ENCODE measurements at regions of chr4 and their contacts with region 1.

Region 1: DNA sequence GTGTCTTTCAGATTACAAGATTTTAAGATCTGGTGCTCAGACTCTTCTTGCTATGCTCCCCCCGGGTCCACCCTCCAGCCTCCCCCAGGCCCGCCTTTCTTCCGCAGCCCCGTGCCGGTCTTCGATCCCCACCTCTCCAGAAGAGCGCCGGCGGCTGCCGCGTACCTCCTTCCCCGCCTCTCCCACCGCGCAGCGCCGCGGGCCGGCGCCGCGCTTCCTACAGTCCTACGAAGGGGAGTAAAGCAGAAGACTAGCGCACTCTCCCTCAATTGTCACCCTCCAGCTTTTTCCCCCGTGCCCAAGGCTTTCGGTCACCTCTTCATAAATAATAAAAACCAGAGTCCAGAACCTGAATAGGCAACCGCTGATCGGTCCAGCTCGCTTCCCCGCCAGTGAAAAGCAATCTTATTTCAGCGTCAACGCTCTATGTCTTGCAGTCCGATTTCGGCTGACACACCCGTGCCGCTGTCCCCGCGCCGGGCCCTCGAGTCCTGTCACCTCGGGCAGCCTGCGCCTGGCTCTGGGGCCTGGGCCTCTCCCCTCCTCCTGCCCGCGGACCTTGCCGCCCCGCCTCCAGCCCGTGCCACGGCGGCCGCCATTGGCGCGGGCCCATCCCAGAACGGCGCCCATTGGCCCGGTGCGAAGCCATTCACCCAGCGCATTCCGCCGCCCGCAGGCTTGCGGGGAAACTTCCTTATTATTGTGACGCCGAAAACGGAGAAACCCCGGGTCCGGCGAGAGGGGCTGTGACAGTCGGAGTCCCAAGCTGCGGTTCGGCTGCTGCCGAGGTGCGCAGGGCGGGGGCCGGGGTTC is at the start of gene HERC3:
- DNase-seq: peak; percentile 93
- ATAC-seq: peak; percentile 92
- H3K4me3 ChIP-seq: peak within 1 kb of the TSS; percentile 58 to 97 (median 92)
- H3K4me3 Mint-ChIP-seq: peak within 1 kb of the TSS; percentile 99
- H3K27ac ChIP-seq: peak within 1 kb of the TSS; percentile 73 to 91
- H3K27ac Mint-ChIP-seq: peak within 1 kb of the TSS; percentile 95
- H3K4me1 ChIP-seq: peaks cover 11 to 16% of the 10 kb centered on the region in 2 donors
- H3K4me1 Mint-ChIP-seq: peaks cover 39% of the 10 kb centered on the region
- H3K27me3 ChIP-seq: no peaks in the 10 kb centered on the region
- H3K27me3 Mint-ChIP-seq: no peaks in the 10 kb centered on the region
- CTCF ChIP-seq: peak; percentile 15
- total RNA-seq, gene HERC3: 75.5 and 78.1 TPM in 2 replicates

Region 2: DNA sequence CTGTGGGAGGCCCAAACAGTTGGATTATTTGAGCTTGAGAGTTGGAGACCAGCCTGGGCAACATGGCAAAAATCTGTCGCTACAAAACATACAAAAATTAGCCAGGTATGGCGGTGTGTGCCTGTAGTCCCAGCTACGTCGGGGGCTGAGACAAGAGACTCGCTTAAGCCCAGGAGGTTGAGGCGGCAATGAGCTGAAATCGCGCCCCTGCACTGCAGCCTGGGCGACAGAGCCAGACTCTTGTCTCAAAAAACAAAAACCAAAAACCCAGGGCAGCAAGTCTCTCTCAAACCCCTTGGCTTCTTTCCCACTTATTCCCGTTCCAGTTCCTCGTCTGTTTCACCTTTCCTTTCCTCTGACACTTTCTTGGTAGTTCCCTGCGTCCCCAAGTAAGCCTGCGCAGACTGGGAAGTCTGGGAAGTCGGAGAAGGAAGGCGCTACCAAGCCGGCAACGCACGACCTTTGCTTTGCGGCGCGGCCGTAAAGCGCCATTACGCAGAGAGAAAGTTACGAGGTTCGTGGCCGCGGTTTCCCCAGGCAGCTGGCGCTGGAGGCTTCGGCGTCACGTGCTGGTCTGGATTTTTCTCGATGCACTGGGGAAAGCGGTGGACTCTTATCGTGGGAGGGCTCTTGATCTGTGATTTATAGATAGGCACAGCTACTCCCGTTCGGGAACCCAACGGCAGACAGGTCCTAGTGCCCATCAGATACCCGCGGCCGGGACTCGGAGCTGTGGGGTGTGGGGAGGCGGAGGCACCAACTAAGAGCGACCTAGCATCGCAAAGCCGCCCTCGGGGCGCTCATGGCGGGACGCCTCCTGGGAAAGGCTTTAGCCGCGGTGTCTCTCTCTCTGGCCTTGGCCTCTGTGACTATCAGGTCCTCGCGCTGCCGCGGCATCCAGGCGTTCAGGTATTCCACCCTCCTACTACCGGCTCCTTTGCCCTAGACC is 1169.6 kb before region 1 on chr4 and contains the start of gene NUDT9:
- CTCF ChIA-PET with region 1: no interaction called
- POLR2A ChIA-PET with region 1: no interaction called
- intact Hi-C with region 1: loop called (anchors 2 kb)
- DNase-seq: peak; percentile 93
- ATAC-seq: peak; percentile 85
- H3K4me3 ChIP-seq: peak within 1 kb of the TSS; percentile 86 to 97 (median 89)
- H3K4me3 Mint-ChIP-seq: peak within 1 kb of the TSS; percentile 100
- H3K27ac ChIP-seq: peak within 1 kb of the TSS; percentile 80 to 92
- H3K27ac Mint-ChIP-seq: peak within 1 kb of the TSS; percentile 100
- H3K4me1 ChIP-seq: peaks cover 16 to 26% of the 10 kb centered on the region in 2 donors
- H3K4me1 Mint-ChIP-seq: peaks cover 40% of the 10 kb centered on the region
- H3K27me3 ChIP-seq: no peaks in the 10 kb centered on the region
- H3K27me3 Mint-ChIP-seq: no peaks in the 10 kb centered on the region
- CTCF ChIP-seq: no peak
- total RNA-seq, gene NUDT9: 17.5 and 21.5 TPM in 2 replicates

Region 3: DNA sequence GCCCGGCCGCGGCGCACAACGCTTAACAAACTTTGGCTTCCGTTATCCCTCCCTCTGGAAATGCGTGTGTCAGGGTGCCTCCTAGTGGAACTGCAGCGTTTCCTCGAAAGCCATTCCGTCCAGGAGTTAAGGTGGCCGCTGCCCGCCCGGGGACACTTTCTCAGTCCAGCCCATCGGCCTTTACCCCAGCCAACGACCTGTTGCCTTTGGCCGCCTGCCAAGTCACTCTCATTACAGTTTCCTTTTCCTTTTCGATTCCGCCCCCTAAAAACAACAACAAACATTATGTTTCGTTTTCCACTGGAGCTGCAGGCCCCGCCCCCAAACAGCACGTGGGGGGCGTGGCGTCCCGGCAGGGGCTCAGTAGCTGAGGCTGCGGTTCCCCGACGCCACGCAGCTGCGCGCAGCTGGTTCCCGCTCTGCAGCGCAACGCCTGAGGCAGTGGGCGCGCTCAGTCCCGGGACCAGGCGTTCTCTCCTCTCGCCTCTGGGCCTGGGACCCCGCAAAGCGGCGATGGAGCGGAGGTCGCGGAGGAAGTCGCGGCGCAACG is 135.2 kb before region 1 on chr4 and contains the start of gene HERC5:
- CTCF ChIA-PET with region 1: no interaction called
- POLR2A ChIA-PET with region 1: no interaction called
- intact Hi-C with region 1: loop called (anchors 1 kb)
- DNase-seq: peak; percentile 96
- ATAC-seq: peak; percentile 94
- H3K4me3 ChIP-seq: peak within 1 kb of the TSS; percentile 69 to 93 (median 85)
- H3K4me3 Mint-ChIP-seq: peak within 1 kb of the TSS; percentile 100
- H3K27ac ChIP-seq: peak within 1 kb of the TSS; percentile 52 to 70
- H3K27ac Mint-ChIP-seq: peak within 1 kb of the TSS; percentile 99
- H3K4me1 ChIP-seq: peaks cover 11 to 16% of the 10 kb centered on the region in 2 donors
- H3K4me1 Mint-ChIP-seq: peaks cover 19% of the 10 kb centered on the region
- H3K27me3 ChIP-seq: no peaks in the 10 kb centered on the region
- H3K27me3 Mint-ChIP-seq: no peaks in the 10 kb centered on the region
- CTCF ChIP-seq: no peak
- total RNA-seq, gene HERC5: 10.6 and 12.0 TPM in 2 replicates

Region 4: DNA sequence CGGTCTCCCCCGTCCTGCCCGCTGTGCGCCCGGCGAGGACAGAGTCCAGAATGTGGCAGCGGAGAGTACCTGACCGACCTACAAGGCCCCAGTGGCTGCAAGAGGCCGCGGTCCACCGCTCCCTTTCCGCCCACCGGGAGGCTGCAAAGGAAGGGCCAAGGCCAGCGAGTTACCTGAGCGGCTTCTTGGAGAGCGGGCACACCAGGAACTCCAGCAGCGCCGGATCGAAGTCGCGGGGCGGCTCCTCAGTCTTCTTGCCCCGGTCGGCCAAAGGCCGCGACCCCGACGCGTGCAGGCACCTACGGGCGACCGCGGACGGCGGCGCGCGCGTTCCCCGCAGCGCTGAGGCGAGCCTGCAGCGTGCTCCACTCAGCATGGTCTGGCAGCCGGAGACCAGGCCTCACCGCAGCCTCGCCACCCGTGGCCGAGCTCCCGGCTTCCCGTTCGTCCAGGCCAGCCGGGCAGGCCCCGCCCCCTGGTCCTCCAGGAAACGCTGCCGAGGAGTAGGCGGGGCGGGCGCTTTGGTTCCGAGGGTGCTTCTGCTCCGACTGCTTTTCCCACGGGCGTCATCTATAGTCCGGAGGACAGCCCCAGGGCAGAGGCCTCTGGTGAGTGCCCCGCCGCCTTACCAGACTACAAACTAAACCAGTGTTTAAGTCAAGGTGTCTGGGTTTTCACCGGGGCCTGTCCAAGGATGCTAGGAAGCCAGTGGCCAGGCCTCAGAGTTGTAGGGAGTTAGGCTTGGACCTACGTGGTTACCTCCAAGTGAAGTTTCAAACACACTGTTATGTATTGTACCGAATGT is 68.5 kb before region 1 on chr4 and contains the start of gene PYURF:
- CTCF ChIA-PET with region 1: interaction called, 5 read pairs
- POLR2A ChIA-PET with region 1: no interaction called
- intact Hi-C with region 1: loop called (anchors 1 kb)
- DNase-seq: peak; percentile 82
- ATAC-seq: peak; percentile 92
- H3K4me3 ChIP-seq: peak within 1 kb of the TSS; percentile 66 to 88 (median 68)
- H3K4me3 Mint-ChIP-seq: peak within 1 kb of the TSS; percentile 90
- H3K27ac ChIP-seq: peak within 1 kb of the TSS; percentile 28 to 70
- H3K27ac Mint-ChIP-seq: peak within 1 kb of the TSS; percentile 87
- H3K4me1 ChIP-seq: peaks cover 12 to 18% of the 10 kb centered on the region in 2 donors
- H3K4me1 Mint-ChIP-seq: peaks cover 20% of the 10 kb centered on the region
- H3K27me3 ChIP-seq: no peaks in the 10 kb centered on the region
- H3K27me3 Mint-ChIP-seq: no peaks in the 10 kb centered on the region
- CTCF ChIP-seq: no peak
- total RNA-seq, gene PYURF: 38.1 and 40.5 TPM in 2 replicates

Region 5: DNA sequence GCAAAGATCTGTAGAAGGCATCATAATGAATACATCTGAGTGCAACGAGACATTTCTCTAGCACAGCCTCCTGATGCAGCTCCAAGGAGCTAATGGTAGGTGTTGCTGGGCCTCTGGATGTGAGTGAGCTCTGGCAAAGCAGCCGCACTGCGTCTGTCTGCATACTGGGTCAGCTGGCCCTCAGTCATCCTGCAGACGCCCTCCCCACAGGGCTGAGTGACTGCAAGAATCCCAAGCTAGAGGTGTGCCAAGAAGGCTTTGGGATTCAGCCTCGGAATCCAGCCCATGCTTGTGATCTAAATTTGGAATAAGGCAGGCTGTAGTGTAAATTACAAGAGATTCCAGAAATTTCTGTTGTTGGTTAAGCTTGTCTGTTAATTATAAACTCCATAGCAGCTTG is 18.8 kb after region 1 on chr4:
- CTCF ChIA-PET with region 1: interaction called, 6 read pairs
- POLR2A ChIA-PET with region 1: no interaction called
- intact Hi-C with region 1: loop called (anchors 2 kb)
- DNase-seq: no peak
- ATAC-seq: no peak
- H3K4me3 ChIP-seq: no peak overlapping the region
- H3K4me3 Mint-ChIP-seq: no peak overlapping the region
- H3K27ac ChIP-seq: no peak overlapping the region
- H3K27ac Mint-ChIP-seq: peak overlapping the region; percentile 3
- H3K4me1 ChIP-seq: peaks cover 26 to 33% of the 10 kb centered on the region in 2 donors
- H3K4me1 Mint-ChIP-seq: peaks cover 48% of the 10 kb centered on the region
- H3K27me3 ChIP-seq: no peaks in the 10 kb centered on the region
- H3K27me3 Mint-ChIP-seq: no peaks in the 10 kb centered on the region
- CTCF ChIP-seq: no peak

Region 6: GRCh38 chr4:88628759-88629158 is 36.8 kb after region 1 on chr4:
- CTCF ChIA-PET with region 1: no interaction called
- POLR2A ChIA-PET with region 1: no interaction called
- intact Hi-C with region 1: no loop called
- DNase-seq: no peak
- ATAC-seq: no peak
- H3K4me3 ChIP-seq: no peak overlapping the region
- H3K4me3 Mint-ChIP-seq: no peak overlapping the region
- H3K27ac ChIP-seq: no peak overlapping the region
- H3K27ac Mint-ChIP-seq: no peak overlapping the region
- H3K4me1 ChIP-seq: peaks cover 0 to 6% of the 10 kb centered on the region in 2 donors
- H3K4me1 Mint-ChIP-seq: peaks cover 17% of the 10 kb centered on the region
- H3K27me3 ChIP-seq: no peaks in the 10 kb centered on the region
- H3K27me3 Mint-ChIP-seq: no peaks in the 10 kb centered on the region
- CTCF ChIP-seq: no peak

Region 7: GRCh38 chr4:88697588-88698329 is 105.8 kb after region 1 on chr4 and contains the start of gene NAP1L5:
- CTCF ChIA-PET with region 1: no interaction called
- POLR2A ChIA-PET with region 1: no interaction called
- intact Hi-C with region 1: loop called (anchors 5 kb)
- DNase-seq: peak; percentile 84
- ATAC-seq: peak; percentile 92
- H3K4me3 ChIP-seq: peak within 1 kb of the TSS; percentile 55 to 70 (median 67)
- H3K4me3 Mint-ChIP-seq: peak within 1 kb of the TSS; percentile 86
- H3K27ac ChIP-seq: peak within 1 kb of the TSS in 1 of 2 donors; percentile 21
- H3K27ac Mint-ChIP-seq: peak within 1 kb of the TSS; percentile 71
- H3K4me1 ChIP-seq: no peaks in the 10 kb centered on the region
- H3K4me1 Mint-ChIP-seq: peaks cover 8% of the 10 kb centered on the region
- H3K27me3 ChIP-seq: no peaks in the 10 kb centered on the region
- H3K27me3 Mint-ChIP-seq: no peaks in the 10 kb centered on the region
- CTCF ChIP-seq: no peak
- total RNA-seq, gene NAP1L5: 1.2 and 1.7 TPM in 2 replicates

Region 8: DNA sequence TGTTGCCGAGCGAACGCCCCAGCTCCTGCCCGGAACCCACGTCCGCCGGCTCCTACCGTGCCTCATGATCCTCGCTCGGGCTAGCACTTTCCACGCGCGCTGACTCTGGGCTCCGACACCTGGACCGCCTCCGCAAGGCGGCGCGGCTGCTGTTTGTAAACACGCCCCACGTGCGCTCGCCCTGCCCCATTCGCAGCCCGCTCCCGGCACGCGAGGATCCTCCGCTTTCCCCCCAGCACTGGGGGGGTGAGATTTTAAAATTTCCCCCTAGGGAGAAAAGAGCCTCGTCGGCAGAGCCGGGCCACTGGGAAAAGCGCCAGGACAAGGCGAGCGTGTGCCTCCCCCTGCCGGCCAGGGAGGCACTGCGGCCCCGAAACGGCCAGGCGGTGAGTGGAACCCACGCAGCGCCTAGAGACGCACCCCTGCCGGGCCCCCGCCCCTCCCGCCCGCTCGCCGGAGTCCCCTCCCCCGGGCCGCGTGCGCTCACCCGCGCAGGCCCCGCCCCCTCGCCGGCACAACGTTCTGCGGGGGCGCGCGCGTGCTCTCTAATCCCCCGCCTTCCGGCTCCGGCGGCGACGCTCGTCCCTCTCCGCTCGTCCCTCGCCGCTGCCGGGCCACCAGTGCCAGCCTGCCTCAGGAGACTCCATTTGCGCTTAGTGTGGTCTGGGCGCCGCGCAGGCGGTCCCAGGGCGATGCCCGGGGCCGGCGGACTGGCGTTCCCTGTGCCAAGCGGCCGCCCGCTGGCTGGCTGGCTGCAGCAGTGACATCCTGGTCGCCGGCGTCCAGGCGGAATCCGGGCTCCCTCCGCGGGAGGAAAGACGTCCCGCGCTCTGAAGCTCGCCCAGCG is 519.2 kb after region 1 on chr4 and contains the start of gene TIGD2:
- CTCF ChIA-PET with region 1: no interaction called
- POLR2A ChIA-PET with region 1: no interaction called
- intact Hi-C with region 1: loop called (anchors 1 kb)
- DNase-seq: peak; percentile 94
- ATAC-seq: peak; percentile 92
- H3K4me3 ChIP-seq: peak within 1 kb of the TSS; percentile 70 to 88 (median 82)
- H3K4me3 Mint-ChIP-seq: peak within 1 kb of the TSS; percentile 88
- H3K27ac ChIP-seq: peak within 1 kb of the TSS; percentile 30 to 85
- H3K27ac Mint-ChIP-seq: peak within 1 kb of the TSS; percentile 85
- H3K4me1 ChIP-seq: peaks cover 14 to 18% of the 10 kb centered on the region in 2 donors
- H3K4me1 Mint-ChIP-seq: peaks cover 27% of the 10 kb centered on the region
- H3K27me3 ChIP-seq: peaks cover 0 to 4% (median 1%) of the 10 kb centered on the region in 4 experiments
- H3K27me3 Mint-ChIP-seq: peaks cover 2% of the 10 kb centered on the region
- CTCF ChIP-seq: peak; percentile 94
- total RNA-seq, gene TIGD2: 8.6 and 9.5 TPM in 2 replicates